GM10248 (cell line): ENCODE measurements at regions of chr10 and their contacts with region 1.

Region 1: DNA sequence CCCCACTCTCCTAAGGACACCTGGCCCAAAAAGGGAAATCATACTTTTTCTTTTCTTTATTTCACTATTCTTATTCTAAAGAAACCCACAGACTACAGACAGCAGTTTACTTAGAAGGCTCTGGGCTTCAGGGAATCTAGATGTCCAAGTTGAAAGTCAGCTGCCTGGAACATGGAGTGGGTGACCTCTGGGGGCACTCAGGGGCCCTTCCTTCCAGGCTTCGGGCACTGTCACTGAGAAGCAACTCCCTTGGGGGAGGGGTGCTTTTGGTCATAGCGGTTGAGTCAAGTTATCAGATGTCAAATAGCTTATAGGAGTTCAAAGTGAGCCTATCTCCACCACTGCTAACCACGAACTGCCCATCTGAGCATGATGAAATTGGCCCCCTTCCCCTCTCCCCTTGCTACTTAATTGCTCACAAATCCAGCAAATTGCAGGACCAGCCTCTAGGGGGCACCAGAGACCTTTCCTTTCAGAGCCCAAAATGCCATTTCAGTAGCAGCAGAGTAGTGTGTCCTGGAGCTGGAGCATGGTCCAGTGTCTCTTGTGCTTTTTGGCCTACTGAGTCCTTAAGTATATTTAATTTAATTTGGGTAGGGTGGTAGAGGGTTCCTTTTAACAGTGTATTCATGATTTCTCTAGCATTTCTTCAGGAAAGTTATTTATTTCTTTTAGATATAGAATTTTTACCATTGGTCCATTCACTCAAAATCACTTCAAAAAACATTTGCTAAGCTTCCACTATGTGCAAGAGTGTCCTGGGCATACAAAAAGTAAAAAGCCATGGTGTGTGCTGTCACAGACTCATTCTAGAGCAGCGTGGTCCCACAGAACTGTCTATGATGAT is 463.8 kb downstream of the KCNMA1 start:
- DNase-seq: peak; percentile 53
- CTCF ChIP-seq: peak; percentile 92

Region 2: DNA sequence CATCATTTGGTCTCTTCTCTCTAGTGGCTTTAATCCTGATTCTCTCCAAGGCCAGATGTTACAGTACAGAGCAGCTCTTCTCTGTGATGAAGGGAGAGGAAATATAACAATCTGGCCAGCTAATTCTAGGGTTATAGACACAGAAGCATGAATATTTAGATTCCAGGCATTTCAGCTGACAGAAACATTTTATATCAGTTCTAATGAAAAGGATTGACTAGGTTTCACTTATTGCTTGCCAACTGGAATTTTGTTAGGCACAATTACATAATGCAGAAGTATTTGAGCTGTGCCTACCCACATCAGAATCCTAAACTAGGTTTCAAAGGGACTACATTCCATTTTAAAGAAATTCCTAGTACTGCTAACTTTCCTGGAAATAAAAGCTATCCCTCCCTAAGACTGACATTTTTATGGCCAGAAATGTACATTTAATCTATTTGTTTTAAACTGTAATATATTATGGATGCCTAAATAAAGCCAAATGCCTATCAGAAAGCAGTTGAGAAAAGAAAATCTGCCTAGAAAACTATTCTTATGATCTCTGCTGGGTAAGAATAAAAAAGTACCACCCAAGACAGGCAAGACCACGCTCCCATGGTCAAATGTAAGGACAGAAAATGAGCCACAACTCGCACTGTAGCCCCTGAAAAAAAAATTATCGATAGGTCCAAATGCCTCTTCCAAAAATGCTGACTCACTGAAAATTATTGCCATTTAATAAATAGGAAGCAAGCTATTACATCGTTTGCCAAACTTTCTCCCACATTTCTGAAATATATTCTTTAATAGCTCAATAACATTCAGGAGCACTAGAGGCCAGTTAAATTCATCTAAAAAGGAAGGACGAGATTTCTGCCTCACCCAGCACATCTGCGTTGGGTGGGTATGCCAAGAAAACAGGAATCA is 34.3 kb before region 1 on chr10:
- CTCF ChIA-PET with region 1: no interaction called
- POLR2A ChIA-PET with region 1: no interaction called
- DNase-seq: no peak
- CTCF ChIP-seq: no peak

Region 3: DNA sequence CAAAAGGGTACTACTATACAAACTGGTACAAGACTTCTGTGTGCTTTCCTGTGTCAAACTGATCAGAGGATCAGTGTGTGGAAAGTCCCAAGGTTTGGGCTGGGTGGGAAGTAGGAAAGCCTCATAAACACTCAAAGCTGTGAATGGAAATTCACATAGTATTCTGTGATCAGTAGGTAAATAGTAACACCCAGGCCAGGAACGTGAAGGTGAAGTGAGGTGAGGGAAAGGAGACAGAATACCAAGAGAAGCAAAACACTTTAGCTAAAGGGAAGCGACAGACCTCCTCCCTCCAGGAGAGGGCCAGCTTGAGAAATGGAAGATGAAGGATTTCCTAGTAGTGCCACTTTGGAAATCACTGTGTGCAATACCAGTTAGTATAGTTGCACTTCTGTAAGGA is 11.9 kb after region 1 on chr10:
- CTCF ChIA-PET with region 1: interaction called, 38 read pairs
- POLR2A ChIA-PET with region 1: no interaction called
- DNase-seq: no peak
- CTCF ChIP-seq: no peak

Region 4: DNA sequence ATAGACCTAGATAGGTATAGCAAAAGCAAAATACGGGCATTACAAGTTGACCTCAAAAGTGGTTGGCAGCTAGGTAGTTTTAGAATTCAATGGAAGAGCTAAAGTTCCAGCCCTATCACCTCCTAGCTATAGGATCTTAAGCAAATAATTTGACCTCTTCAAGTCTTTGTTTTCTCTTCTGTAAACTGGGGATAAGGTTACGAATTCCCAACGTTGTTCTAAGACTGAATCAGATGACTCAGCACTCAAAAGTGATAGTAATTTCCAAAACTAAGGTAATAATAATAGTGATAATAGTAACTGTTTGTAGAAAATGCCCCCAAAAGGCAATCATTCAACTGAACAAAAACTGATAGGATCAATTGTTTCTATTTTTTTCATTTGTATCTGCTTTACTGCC is 18.6 kb after region 1 on chr10:
- CTCF ChIA-PET with region 1: interaction called, 38 read pairs
- POLR2A ChIA-PET with region 1: no interaction called
- DNase-seq: no peak
- CTCF ChIP-seq: no peak

Region 5: DNA sequence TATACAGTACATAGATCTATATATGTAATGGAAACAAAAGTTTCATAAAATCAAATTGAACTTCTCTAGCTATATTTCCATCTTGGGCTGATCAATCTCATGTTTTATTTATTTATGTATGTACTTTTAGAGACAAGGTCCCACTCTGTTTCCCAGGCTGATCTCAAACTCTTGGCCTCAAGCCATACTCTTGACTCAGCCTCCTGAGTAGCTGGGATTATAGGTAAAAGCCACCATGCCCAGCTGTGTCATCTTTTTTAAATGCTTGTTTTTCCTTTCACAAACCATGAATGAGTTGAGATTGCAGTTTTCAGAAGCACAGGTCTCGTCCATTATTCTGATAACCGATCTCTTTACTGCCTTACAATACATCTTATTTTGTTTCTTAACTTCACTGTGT is 62.9 kb after region 1 on chr10:
- CTCF ChIA-PET with region 1: interaction called, 11 read pairs
- POLR2A ChIA-PET with region 1: no interaction called
- DNase-seq: no peak
- CTCF ChIP-seq: no peak

Region 6: DNA sequence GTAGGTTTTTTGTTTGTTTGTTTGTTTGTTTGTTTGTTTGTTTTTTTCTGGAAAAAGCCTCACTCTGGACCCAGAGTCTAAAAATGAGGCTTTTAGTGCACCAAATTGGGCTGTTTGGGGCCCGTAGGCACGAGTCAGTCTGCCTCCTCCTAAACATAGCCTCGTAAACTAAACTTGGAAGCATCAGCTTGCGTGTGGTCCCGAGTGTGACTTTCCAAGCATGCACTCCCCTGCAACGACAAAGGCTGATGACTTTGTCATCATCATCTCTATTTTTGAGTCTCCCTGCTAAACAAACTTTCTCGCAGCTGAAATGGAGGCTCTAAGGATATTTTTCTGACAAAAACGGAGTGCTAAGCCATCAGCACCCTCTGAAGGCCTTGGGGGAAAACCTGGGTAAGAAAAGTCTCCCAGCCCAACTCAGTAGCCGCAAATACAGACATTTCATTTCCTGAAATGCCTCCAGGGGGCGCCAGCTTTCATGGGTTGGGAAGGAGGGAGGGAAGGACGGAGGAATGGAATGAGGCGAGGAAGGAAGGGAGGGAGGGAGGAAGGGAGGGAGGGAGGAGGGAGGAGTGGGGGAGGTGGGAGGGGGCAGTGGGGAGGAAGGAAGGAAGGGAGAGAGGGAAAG is 217.9 kb after region 1 on chr10:
- CTCF ChIA-PET with region 1: interaction called, 11 read pairs
- POLR2A ChIA-PET with region 1: no interaction called
- DNase-seq: peak; percentile 51
- CTCF ChIP-seq: peak; percentile 66